Aorta (tissue), 5 donors: ENCODE measurements at regions of chr10 and their contacts with region 1.

Region 1: DNA sequence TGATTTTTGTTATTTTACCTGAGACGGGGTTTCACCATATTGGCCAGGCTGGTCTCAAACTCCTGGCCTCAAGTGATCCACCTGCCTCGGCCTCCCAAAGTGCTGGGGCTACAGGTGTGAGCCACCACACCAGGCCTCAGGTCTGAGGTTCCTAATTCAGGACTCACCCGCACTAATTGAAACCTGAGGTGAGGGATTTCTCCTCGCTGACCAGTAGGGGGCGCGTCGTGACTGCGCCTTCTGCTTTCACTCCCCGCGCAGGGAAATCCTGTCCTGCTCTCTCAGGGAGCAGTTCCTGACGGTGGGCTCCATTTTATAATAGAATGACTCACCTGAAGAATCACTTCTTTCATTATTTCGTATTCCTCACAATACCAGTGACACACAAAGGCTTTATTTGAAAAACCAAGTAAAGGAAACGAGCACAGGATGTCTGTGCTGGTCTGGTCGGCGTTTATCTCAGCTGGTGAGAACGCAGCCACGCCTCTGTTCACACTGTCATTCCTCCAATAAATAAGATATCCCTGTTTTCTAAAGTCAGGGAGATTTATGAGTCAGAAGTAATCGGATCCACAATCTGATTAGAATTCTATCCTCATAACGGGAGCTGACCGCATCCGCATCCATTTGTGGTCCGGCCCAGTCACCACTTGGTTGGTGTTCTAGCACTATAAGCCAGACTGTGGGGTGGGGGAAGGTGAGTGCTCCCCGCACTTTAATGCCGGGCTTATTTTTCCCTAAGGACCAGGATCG is 35.4 kb downstream of the BAG3 start:
- DNase-seq: peak; percentile 90 to 94
- ATAC-seq: peak; percentile 94
- H3K4me3 ChIP-seq: no peak overlapping the region
- H3K27ac ChIP-seq: no peak overlapping the region
- H3K4me1 ChIP-seq: no peaks in the 10 kb centered on the region
- H3K27me3 ChIP-seq: no peaks in the 10 kb centered on the region

Region 2: GRCh38 chr10:119737827-119738226 is 51.2 kb after region 1 on chr10:
- intact Hi-C with region 1: loop called in 1 of 2 experiments (anchors 10 kb)
- DNase-seq: no peak
- ATAC-seq: peak; percentile 82
- H3K4me3 ChIP-seq: no peak overlapping the region
- H3K27ac ChIP-seq: no peak overlapping the region
- H3K4me1 ChIP-seq: no peaks in the 10 kb centered on the region
- H3K27me3 ChIP-seq: no peaks in the 10 kb centered on the region